ENCODE measurements at regions of chr7 and their contacts with region 1.

Region 1: GRCh38 chr7:41877118-41877517 is 174.2 kb upstream of the INHBA start:
- DNase-seq: no peak
- H3K4me3 ChIP-seq: no peak overlapping the region
- H3K27ac ChIP-seq: no peak overlapping the region
- H3K4me1 ChIP-seq: no peaks in the 10 kb centered on the region
- H3K27me3 ChIP-seq: no peaks in the 10 kb centered on the region
- CTCF ChIP-seq: no peak
- POLR2A ChIP-seq: no peak

Region 2: GRCh38 chr7:41792120-41792519 is 85.0 kb before region 1 on chr7:
- intact Hi-C with region 1: no loop called
- DNase-seq: no peak
- H3K4me3 ChIP-seq: no peak overlapping the region
- H3K27ac ChIP-seq: no peak overlapping the region
- H3K4me1 ChIP-seq: no peaks in the 10 kb centered on the region
- H3K27me3 ChIP-seq: no peaks in the 10 kb centered on the region
- CTCF ChIP-seq: no peak
- POLR2A ChIP-seq: no peak

Region 3: GRCh38 chr7:41847151-41847550 is 30.0 kb before region 1 on chr7:
- intact Hi-C with region 1: no loop called
- DNase-seq: no peak
- H3K4me3 ChIP-seq: no peak overlapping the region
- H3K27ac ChIP-seq: no peak overlapping the region
- H3K4me1 ChIP-seq: no peaks in the 10 kb centered on the region
- H3K27me3 ChIP-seq: no peaks in the 10 kb centered on the region
- CTCF ChIP-seq: no peak
- POLR2A ChIP-seq: no peak

Region 4: DNA sequence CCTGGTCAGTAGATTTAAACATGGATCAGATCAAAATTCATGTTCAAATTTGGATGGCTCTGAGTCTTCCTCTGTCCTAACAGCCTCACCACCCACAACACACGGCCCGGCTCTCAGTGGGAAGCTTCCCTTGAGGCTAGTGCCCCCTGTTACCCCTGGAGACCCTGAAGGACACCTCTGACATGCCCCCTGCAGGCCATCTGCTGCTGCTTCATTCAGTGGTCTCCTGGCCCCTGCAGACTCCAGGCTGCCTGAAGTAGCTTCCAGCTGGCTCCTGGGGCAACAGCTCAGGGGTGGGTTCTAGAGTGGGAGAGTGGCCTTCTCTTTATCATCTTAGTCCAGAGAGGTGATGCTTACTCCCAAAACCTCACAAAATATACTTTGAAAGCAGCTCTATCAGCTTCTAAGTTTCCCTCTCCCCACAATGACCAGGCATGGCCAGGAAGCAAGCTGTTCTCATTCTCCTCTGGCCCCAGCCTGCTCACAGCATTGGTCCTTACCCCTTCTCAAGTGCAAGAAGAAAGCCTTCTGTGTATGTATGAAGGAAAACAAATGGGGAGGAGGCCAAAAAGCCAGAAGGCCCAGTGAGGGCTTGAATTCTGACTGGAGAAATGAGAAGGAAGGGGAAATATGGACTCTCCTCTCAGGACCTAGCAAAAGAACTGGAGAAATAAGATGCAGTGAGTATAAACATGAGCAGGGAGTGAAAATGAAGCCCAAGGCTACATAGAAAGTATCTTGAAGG is 15.4 kb after region 1 on chr7:
- intact Hi-C with region 1: loop called (anchors 1 kb)
- DNase-seq: no peak
- H3K4me3 ChIP-seq: no peak overlapping the region
- H3K27ac ChIP-seq: no peak overlapping the region
- H3K4me1 ChIP-seq: peaks cover 4% of the 10 kb centered on the region
- H3K27me3 ChIP-seq: no peaks in the 10 kb centered on the region
- CTCF ChIP-seq: no peak
- POLR2A ChIP-seq: no peak